Activated CD4-positive, alpha-beta T cell treated with anti-CD3 and anti-CD28 coated beads for 36 hours (primary cell): ENCODE measurements at regions of chr10 and their contacts with region 1.

Region 1: GRCh38 chr10:93352638-93353383 is 129.3 kb downstream of the MYOF start:
- DNase-seq: no peak
- ATAC-seq: no peak
- H3K4me3 Mint-ChIP-seq: no peak overlapping the region
- H3K27ac Mint-ChIP-seq: no peak overlapping the region
- H3K4me1 Mint-ChIP-seq: peaks cover 3% of the 10 kb centered on the region
- H3K27me3 Mint-ChIP-seq: peaks cover 4% of the 10 kb centered on the region

Region 2: DNA sequence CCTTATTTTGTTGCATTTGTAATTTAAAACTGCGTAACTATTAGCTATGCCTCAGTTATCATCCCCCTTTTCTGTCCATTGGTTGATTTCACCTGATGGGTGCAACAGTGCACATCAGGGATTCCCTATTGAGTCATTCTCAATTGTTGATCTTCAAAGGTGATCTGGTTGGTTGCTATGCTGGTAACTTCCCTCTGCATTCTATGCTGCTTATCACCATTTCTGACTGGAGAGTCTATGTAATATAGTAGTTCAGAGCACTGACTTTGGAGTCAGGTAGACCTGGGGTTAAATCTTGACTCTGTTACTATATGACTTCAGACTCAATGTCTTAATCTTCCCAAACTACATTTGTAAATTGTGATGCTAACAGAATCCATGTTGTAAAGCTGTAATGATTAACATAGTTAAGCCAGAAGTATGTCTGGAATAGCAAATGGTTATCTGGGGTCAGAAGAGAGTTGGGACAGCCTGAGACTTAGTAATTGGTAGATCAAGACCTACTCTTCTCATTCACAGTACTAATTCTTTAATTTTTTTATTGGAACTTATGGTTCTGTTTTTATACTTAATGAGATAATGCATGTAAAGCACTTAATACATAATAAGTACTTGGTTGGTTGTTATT is 466.4 kb before region 1 on chr10:
- CTCF ChIA-PET with region 1: interaction called, 3 read pairs
- POLR2A ChIA-PET with region 1: no interaction called
- intact Hi-C with region 1: loop called (anchors 1 to 5 kb)
- DNase-seq: no peak
- ATAC-seq: peak; percentile 33
- H3K4me3 Mint-ChIP-seq: no peak overlapping the region
- H3K27ac Mint-ChIP-seq: no peak overlapping the region
- H3K4me1 Mint-ChIP-seq: peaks cover 8% of the 10 kb centered on the region
- H3K27me3 Mint-ChIP-seq: no peaks in the 10 kb centered on the region

Region 3: GRCh38 chr10:93080350-93081046 is 272.3 kb before region 1 on chr10:
- CTCF ChIA-PET with region 1: interaction called, 5 read pairs
- POLR2A ChIA-PET with region 1: no interaction called
- intact Hi-C with region 1: loop called (anchors 1 to 2 kb)
- DNase-seq: peak; percentile 72
- ATAC-seq: peak; percentile 70
- H3K4me3 Mint-ChIP-seq: no peak overlapping the region
- H3K27ac Mint-ChIP-seq: no peak overlapping the region
- H3K4me1 Mint-ChIP-seq: peaks cover 7% of the 10 kb centered on the region
- H3K27me3 Mint-ChIP-seq: peaks cover 45% of the 10 kb centered on the region

Region 4: DNA sequence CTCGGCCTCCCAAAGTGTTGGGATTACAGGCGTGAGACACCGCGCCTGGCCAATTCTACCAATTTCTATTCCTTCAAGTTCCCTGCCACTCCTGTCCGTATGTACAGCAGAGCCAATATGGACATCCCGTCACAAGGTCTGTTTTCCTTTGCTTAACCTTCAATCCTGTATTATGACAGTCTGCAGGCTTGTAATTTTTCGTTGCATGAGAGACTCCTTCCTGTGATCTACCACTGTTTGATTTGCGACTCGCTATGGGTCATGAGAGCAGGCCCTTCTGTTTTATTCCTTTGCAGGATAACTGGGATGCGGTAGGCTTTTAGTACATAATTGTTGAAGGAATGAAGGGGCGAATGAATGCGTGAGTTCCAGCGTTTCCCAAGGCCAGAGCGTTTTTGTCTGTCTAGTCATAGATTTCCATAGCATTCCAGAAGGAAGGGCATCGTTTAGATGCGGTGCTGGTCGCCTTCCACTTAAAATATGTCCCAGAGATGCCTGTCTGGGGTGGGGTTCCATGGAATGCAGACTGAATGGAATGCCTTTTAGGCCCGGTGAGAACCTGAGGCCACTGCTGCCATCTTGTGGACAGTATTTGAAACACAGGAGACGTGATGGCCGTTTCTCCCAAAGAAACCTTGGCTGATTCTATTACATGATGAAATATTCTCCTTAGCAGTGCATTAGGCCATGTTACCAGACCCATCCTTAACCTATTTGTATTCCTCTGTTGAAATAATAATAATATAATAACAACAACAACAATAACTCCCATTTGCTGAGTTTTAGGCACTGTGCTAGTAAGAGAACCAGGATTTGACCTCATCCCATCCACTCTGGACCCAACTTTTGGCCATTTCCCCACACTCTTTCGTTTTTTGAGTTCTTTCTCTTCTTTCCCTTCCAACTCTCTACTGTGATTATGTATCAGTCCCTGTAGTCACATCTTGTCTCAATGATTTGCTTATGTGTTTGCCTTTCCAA is 63.9 kb before region 1 on chr10:
- CTCF ChIA-PET with region 1: interaction called, 3 read pairs
- POLR2A ChIA-PET with region 1: no interaction called
- intact Hi-C with region 1: loop called (anchors 2 kb)
- DNase-seq: peak; percentile 71
- ATAC-seq: no peak
- H3K4me3 Mint-ChIP-seq: no peak overlapping the region
- H3K27ac Mint-ChIP-seq: no peak overlapping the region
- H3K4me1 Mint-ChIP-seq: peaks cover 2% of the 10 kb centered on the region
- H3K27me3 Mint-ChIP-seq: peaks cover 2% of the 10 kb centered on the region